WTC11 (cell line): ENCODE measurements at regions of chr21 and their contacts with region 1.

Region 1: DNA sequence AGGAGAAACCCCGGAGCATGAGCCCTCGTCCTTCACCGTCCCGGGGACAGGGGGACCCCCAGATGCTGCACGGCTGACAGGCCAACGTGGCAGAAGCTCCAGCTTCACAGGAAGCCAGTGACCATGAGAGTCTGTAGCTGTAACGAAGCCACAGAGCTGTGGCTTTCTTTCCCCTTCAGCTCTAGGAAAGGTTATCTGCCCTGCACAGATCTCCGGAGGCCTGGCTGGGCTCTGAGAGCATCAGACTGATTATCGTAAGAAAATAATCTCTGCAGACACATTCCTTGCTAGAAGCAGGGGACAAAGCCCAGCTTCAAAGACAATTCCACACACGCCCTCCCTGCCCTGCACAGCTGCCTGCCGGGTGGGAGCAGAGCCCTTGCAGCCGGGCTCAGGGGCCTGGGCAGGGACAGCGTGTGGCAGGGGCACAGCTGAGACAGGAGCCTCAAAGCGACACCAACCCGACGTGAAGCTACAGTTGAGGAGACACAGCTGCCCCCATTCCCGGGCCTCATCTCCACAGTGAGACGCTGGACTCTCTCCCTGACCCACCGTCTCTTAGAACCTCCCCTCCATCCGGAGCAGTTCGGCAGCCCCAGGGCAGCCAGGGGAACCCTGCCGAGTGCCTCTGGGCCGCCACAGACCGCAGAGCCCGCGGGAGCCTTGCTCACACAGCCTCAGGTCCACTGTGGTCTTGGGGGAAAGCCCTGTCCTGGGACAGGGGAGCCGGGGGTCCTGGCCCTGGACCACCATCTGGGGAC is 30.6 kb downstream of the POFUT2 start:
- DNase-seq: no peak
- ATAC-seq: no peak
- H3K4me3 Mint-ChIP-seq: no peak overlapping the region
- H3K27ac Mint-ChIP-seq: no peak overlapping the region
- H3K4me1 Mint-ChIP-seq: no peaks in the 10 kb centered on the region
- H3K27me3 Mint-ChIP-seq: no peaks in the 10 kb centered on the region
- CTCF ChIP-seq: no peak

Region 2: DNA sequence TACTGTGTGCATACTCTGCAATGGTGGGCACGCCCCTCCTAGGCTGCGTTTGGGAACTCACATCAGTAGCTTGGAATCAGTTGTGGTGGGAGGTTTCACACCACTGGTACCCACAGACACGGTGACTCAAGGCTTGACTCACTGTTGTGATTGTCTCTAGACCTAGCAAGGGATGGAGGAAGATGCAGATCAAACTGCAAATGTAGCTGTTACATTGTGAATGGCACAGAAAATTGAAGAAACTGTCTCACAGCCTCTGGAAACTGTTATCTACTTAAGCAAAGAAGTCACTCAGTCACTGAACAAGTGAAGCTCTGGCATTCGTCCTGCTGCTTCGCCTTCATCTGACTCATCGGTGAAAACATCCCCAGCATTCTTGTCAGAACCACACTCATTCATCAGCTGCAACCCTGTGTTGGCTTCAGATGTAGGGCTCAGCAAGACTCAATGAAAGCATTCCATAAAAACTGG is 28.9 kb before region 1 on chr21:
- CTCF ChIA-PET with region 1: no interaction called
- POLR2A ChIA-PET with region 1: no interaction called
- DNase-seq: no peak
- ATAC-seq: no peak
- H3K4me3 Mint-ChIP-seq: no peak overlapping the region
- H3K27ac Mint-ChIP-seq: no peak overlapping the region
- H3K4me1 Mint-ChIP-seq: 0 out of 2 replicates have a peak, but pooled peaks cover 2% of the 10 kb centered on the region
- H3K27me3 Mint-ChIP-seq: no peaks in the 10 kb centered on the region; the same call in 1 of the 2 replicates
- CTCF ChIP-seq: no peak

Region 3: GRCh38 chr21:45270306-45270821 is 13.3 kb after region 1 on chr21:
- CTCF ChIA-PET with region 1: interaction called, 12 read pairs
- POLR2A ChIA-PET with region 1: no interaction called
- DNase-seq: peak; percentile 48
- ATAC-seq: peak; percentile 46; the same call in 1 of the 2 replicates
- H3K4me3 Mint-ChIP-seq: no peak overlapping the region
- H3K27ac Mint-ChIP-seq: no peak overlapping the region
- H3K4me1 Mint-ChIP-seq: no peaks in the 10 kb centered on the region
- H3K27me3 Mint-ChIP-seq: no peaks in the 10 kb centered on the region
- CTCF ChIP-seq: no peak